Endothelial cell of umbilical vein (primary cell): ENCODE measurements at regions of chr6 and their contacts with region 1.

Region 1: GRCh38 chr6:83505356-83505755 is 7.0 kb upstream of the PRSS35 start:
- DNase-seq: no peak
- H3K4me3 ChIP-seq: no peak overlapping the region
- H3K27ac ChIP-seq: no peak overlapping the region
- H3K4me1 ChIP-seq: no peaks in the 10 kb centered on the region
- H3K27me3 ChIP-seq: peaks cover 0 to 2% of the 10 kb centered on the region in 2 experiments
- CTCF ChIP-seq: no peak
- POLR2A ChIP-seq: no peak

Region 2: DNA sequence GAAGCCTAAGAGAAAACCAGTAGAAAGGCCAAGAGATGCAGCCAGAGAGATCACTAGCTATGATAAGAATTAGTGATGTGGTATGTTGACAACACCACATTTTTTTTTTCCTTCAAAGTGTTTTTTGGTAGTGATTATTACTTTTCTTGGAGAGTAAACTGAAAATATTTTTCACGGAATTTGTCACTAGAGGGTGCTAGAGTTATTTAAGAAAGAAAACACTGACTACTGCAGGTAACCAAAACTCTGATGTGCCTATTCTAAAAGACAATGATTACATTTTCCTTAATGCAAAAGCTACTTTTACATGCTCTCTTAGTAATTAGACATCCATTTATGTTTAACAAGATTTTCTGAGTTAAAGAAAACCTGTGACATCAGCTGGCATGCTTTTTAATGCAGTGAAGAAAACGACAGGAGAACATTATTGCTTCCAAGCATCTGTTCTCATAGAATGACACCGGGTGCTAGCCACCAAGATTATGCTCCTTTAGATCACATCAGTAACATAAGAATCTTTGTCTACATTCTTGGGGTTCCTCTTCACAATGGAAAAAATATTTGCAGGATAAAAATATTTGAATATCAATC is 283.4 kb before region 1 on chr6:
- CTCF ChIA-PET with region 1: interaction called, 319 read pairs
- POLR2A ChIA-PET with region 1: no interaction called
- dilution Hi-C with region 1: loop called (anchors 25 kb)
- intact Hi-C with region 1: no loop called
- DNase-seq: peak; percentile 46
- H3K4me3 ChIP-seq: no peak overlapping the region
- H3K27ac ChIP-seq: no peak overlapping the region
- H3K4me1 ChIP-seq: peaks cover 9% of the 10 kb centered on the region
- H3K27me3 ChIP-seq: no peaks in the 10 kb centered on the region
- CTCF ChIP-seq: peak in 1 of 2 donors; percentile 29
- POLR2A ChIP-seq: no peak

Region 3: DNA sequence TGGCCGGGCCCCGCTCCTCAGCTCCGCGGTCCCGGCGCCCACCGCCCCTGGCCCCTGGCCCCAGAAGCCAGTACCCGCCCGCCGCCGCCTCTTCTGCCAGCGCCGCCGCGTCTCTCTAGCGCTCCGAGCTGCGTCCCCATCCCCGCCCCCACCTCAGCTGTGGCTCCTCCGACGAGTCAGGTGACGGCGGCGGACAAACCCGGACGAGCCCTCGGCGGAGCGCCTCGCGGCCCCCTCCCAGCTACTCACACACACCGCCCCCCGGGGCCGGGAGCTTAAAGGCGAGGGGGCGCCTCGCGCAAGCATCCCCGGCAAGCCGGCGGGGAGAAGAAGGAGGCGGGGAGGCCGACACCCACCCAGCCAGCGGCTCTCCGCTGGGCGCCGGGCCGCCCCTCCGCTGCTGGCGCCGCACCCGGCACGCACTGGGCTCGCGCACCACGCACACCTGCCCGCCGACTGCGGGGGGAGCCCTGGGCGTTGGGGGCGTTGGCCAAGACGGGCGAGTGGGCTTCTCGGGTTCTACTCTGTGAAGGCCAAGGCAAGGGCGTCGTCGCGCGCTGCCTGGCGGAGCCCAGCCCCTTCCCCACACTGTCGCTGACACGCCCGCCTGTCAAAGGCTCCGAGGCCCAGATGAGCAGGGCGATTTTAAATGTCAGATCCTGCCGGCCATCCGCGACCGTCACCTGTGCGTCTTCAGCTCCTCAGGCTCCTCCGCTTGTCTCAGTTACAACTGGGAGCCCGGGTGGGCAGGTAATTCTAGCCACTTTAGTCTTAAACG is 203.8 kb after region 1 on chr6 and contains the start of gene SNAP91:
- CTCF ChIA-PET with region 1: no interaction called
- POLR2A ChIA-PET with region 1: no interaction called
- dilution Hi-C with region 1: no loop called
- intact Hi-C with region 1: no loop called
- DNase-seq: peak; percentile 51
- H3K4me3 ChIP-seq: peak within 1 kb of the TSS; percentile 48 to 68 (median 54)
- H3K27ac ChIP-seq: no peak within 1 kb of the TSS
- H3K4me1 ChIP-seq: peaks cover 14% of the 10 kb centered on the region
- H3K27me3 ChIP-seq: peaks cover 9 to 34% of the 10 kb centered on the region in 2 experiments
- CTCF ChIP-seq: no peak
- POLR2A ChIP-seq: no peak
- total RNA-seq, gene SNAP91: 0.72 and 1.5 TPM in 2 replicates